Aorta (tissue), 5 donors: ENCODE measurements at regions of chr6 and their contacts with region 1.

Region 1: GRCh38 chr6:144013486-144013909 is 5.4 kb upstream of the PLAGL1 start:
- DNase-seq: peak; percentile 83 to 92
- ATAC-seq: peak; percentile 81
- H3K4me3 ChIP-seq: no peak overlapping the region
- H3K27ac ChIP-seq: no peak overlapping the region
- H3K4me1 ChIP-seq: no peaks in the 10 kb centered on the region
- H3K27me3 ChIP-seq: peaks cover 0 to 2% of the 10 kb centered on the region in 2 donors

Region 2: GRCh38 chr6:143940011-143940597 is 73.4 kb before region 1 on chr6:
- intact Hi-C with region 1: loop called (anchors 5 kb)
- DNase-seq: no peak
- ATAC-seq: no peak
- H3K4me3 ChIP-seq: no peak overlapping the region
- H3K27ac ChIP-seq: no peak overlapping the region
- H3K4me1 ChIP-seq: no peaks in the 10 kb centered on the region
- H3K27me3 ChIP-seq: no peaks in the 10 kb centered on the region

Region 3: DNA sequence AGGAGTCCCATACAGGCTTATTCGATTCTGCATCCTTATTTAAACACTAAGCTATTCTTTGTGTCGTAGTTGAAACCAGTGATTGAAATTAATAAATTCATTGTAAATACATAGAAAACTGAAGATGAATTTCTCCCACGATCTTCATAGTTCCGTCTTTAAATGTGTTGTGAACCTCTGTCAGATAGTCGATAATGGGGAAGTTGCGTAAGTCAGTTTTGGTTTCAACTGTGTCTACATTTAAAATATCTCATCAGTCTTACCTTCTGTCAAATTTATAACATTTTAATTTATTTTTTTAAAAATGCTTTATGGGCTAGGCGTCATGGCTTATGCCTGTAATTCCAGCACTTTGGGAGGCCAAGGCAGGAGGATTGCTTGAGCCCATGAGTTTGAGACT is 149.5 kb after region 1 on chr6:
- intact Hi-C with region 1: no loop called
- DNase-seq: no peak
- ATAC-seq: no peak
- H3K4me3 ChIP-seq: no peak overlapping the region
- H3K27ac ChIP-seq: no peak overlapping the region
- H3K4me1 ChIP-seq: peaks cover 0 to 5% of the 10 kb centered on the region in 2 donors
- H3K27me3 ChIP-seq: no peaks in the 10 kb centered on the region